Esophagus muscularis mucosa (tissue), 4 donors: ENCODE measurements at regions of chr5 and their contacts with region 1.

Region 1: DNA sequence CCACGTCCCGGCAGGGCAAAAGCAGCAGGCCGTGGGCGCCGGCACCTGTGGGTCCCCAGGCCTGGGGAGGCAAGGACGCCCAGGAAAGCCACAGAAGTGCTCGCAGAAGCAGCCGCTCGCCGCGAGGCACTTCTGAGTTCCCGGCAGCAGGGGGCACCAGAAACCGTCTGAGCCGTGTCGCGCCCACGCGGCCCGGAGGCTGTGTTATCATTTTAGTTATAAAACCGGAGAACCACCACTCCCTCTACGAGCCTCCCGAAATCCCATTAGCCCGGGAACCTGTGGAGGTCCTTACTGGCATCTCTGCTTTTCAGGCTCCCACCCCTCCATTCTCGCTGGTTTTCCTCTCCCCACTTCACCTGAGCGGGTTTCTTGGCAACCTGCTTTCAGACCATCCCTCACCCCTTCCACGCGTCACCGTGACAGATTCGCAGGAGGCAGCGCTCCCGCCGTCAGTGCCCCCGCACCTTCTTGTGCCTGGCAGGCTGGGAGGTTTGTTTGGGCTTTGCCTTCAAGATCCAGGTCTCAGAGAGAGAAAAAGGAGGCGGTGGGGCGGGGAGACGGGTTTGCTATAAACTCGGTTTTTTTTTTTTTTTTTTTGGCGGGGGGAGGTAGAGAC is 2.3 kb downstream of the GDNF start:
- DNase-seq: no peak
- H3K4me3 ChIP-seq: peak overlapping the region; percentile 69 to 82 (median 72)
- H3K27ac ChIP-seq: peak overlapping the region; percentile 90 to 94 (median 92)
- H3K4me1 ChIP-seq: peaks cover 30 to 86% (median 84%) of the 10 kb centered on the region in 4 donors
- H3K27me3 ChIP-seq: peaks cover 0 to 52% (median 0%) of the 10 kb centered on the region in 4 donors
- CTCF ChIP-seq: peak in 2 of 3 experiments; percentile 85 to 89
- EP300 ChIP-seq: no peak
- POLR2A ChIP-seq: no peak

Region 2: GRCh38 chr5:37412515-37413277 is 424.8 kb before region 1 on chr5:
- intact Hi-C with region 1: loop called (anchors 2 kb)
- DNase-seq: no peak
- H3K4me3 ChIP-seq: no peak overlapping the region
- H3K27ac ChIP-seq: no peak overlapping the region
- H3K4me1 ChIP-seq: peaks cover 0 to 6% (median 0%) of the 10 kb centered on the region in 4 donors
- H3K27me3 ChIP-seq: no peaks in the 10 kb centered on the region
- CTCF ChIP-seq: peak; percentile 77 to 92 (median 85)
- EP300 ChIP-seq: no peak
- POLR2A ChIP-seq: no peak

Region 3: GRCh38 chr5:37774912-37775483 is 62.5 kb before region 1 on chr5:
- intact Hi-C with region 1: loop called (anchors 5 kb)
- DNase-seq: no peak
- H3K4me3 ChIP-seq: no peak overlapping the region
- H3K27ac ChIP-seq: no peak overlapping the region
- H3K4me1 ChIP-seq: peaks cover 0 to 39% (median 32%) of the 10 kb centered on the region in 4 donors
- H3K27me3 ChIP-seq: no peaks in the 10 kb centered on the region
- CTCF ChIP-seq: peak; percentile 14 to 65 (median 33)
- EP300 ChIP-seq: no peak
- POLR2A ChIP-seq: no peak

Region 4: DNA sequence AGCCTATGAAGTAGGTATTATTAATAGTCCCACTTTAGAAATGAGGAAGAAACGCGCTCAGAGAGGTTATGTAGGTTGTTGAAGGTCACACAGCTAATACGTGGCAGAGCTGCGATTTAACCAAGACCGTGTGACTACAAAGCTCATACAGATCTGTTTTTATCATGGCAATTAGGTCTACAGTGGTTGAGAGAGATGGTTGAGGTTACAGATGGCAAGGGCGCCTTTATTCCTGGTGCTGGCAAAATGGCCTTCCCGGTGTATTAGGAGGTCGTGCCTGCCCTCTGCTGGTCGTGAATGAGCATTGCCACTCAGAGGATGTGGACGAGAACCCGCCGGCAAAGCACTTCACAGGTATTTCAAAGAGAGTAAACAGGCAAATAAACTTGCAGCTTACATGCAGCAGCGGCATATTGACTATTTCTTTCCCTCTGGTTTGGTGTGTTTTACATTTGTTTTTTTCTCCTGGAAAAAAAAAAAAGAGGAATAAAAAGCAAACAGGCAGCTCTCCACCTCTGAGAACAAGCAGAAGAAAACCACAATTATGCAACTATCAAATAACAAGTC is 355.6 kb after region 1 on chr5:
- intact Hi-C with region 1: loop called (anchors 2 kb)
- DNase-seq: no peak
- H3K4me3 ChIP-seq: no peak overlapping the region
- H3K27ac ChIP-seq: no peak overlapping the region
- H3K4me1 ChIP-seq: no peaks in the 10 kb centered on the region
- H3K27me3 ChIP-seq: no peaks in the 10 kb centered on the region
- CTCF ChIP-seq: peak; percentile 88 to 93 (median 88)
- EP300 ChIP-seq: no peak
- POLR2A ChIP-seq: no peak